Activated T-helper 1 cell treated with anti-CD3 and anti-CD28 coated beads, Interleukin-12 subunit alpha, Interleukin-12 subunit beta, Interleukin-2, Interleukin-4 antibody, amounts not matched to agents 30 ng/mL and 10 ng/mL and 1 ng/mL, durations not matched to agents 14 hours and 24 hours and 36 hours (primary cell): ENCODE measurements at regions of chr3 and their contacts with region 1.

Region 1: GRCh38 chr3:194134757-194135528 is 1.0 kb upstream of the HES1 start:
- DNase-seq: peak; percentile 80
- H3K4me3 Mint-ChIP-seq: peak overlapping the region; percentile 84
- H3K27ac Mint-ChIP-seq: peak overlapping the region; percentile 90
- H3K4me1 Mint-ChIP-seq: peaks cover 82% of the 10 kb centered on the region
- H3K27me3 Mint-ChIP-seq: peaks cover 67% of the 10 kb centered on the region

Region 2: DNA sequence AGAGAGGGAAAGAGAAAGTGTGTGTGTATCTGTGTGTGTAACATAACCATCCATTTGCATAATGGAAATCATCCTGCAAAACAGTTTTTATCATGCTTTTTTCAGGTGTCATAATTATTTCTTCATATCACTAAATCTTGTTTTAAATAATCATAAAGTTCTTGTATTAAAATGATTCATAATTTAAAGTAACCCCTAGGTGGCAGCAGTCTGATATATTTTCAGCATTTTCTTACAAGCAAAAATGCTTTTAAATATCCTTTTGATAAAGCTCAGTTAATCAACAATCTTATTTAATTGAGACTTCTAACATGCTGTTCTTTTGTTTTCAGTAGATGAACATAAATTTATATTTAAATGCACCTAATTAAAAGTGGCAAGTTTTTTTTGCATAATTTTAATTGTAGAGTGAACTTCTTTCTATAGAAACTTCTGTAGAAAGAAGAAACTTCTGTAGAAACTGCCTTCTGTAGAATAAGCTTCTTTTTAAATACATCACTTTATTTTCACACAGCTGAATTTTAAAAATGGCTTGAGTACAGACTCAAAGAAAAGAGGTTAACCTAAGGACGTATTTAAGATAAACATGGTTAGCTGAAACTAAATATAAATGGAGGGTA is 469.5 kb before region 1 on chr3:
- intact Hi-C with region 1: loop called (anchors 5 kb)
- DNase-seq: no peak
- H3K4me3 Mint-ChIP-seq: no peak overlapping the region
- H3K27ac Mint-ChIP-seq: no peak overlapping the region
- H3K4me1 Mint-ChIP-seq: no peaks in the 10 kb centered on the region
- H3K27me3 Mint-ChIP-seq: no peaks in the 10 kb centered on the region

Region 3: GRCh38 chr3:193960487-193961274 is 174.3 kb before region 1 on chr3:
- intact Hi-C with region 1: loop called (anchors 1 kb)
- DNase-seq: no peak
- H3K4me3 Mint-ChIP-seq: no peak overlapping the region
- H3K27ac Mint-ChIP-seq: no peak overlapping the region
- H3K4me1 Mint-ChIP-seq: peaks cover 44% of the 10 kb centered on the region
- H3K27me3 Mint-ChIP-seq: peaks cover 27% of the 10 kb centered on the region

Region 4: GRCh38 chr3:194255252-194256039 is 120.5 kb after region 1 on chr3:
- intact Hi-C with region 1: loop called (anchors 5 kb)
- DNase-seq: peak; percentile 13
- H3K4me3 Mint-ChIP-seq: peak overlapping the region; percentile 48
- H3K27ac Mint-ChIP-seq: peak overlapping the region; percentile 81
- H3K4me1 Mint-ChIP-seq: peaks cover 30% of the 10 kb centered on the region
- H3K27me3 Mint-ChIP-seq: peaks cover 2% of the 10 kb centered on the region

Region 5: DNA sequence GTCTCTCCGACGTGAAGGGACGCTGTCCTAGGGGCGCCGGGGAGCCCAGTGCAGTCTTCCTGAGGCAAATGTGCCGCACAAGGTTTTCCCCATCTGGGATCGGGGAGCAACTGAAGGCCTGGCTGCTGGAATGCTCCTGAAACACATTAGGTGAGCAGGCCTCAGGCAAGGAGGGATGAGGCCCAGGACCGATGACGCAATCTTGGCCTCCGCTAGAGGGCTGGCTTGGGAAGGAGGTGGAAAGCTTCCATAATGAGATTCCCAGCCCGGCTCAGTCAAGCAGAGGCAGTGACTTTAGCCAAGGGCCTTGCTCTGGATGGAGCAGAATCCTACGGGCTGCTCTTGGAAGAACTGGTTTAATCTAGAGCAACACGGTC is 165.4 kb after region 1 on chr3:
- intact Hi-C with region 1: no loop called
- DNase-seq: no peak
- H3K4me3 Mint-ChIP-seq: no peak overlapping the region
- H3K27ac Mint-ChIP-seq: no peak overlapping the region
- H3K4me1 Mint-ChIP-seq: peaks cover 21% of the 10 kb centered on the region
- H3K27me3 Mint-ChIP-seq: peaks cover 2% of the 10 kb centered on the region

Region 6: DNA sequence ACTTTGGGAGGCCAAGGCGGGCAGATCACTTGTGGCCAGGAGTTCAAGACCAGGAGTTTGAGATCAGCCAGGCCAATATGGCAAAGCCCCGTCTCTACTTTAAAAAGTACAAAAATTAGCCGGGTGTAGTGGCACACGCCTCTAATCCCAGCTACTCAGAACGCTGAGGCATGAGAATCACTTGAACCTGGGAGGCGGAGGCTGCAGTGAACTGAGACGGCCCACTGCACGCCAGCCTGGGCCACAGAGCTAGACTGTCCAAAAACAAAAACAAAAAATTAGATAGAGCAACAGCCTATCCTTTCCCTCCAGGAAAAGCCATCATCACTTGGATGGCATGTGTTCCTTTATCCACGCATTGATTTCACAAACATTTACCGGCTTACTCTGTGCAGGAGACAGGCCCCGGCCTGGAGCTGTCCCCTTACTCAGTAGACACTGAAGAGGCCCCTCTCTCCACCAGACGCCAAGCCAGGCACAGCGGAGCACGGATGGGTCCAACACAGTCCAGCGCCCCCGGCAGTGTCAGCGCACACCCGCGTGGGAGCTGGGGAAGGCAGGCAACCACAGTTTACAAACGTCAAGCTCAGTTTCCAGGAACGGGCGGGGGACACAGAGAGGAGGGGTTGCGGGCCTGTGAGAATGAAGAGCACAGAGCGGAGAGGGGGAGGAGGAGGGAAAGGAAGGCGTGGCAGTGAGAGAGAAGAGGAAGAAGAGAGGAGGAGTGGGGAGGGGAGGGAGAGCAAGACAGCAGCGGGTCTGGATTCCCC is 261.0 kb after region 1 on chr3:
- intact Hi-C with region 1: loop called (anchors 2 kb)
- DNase-seq: peak; percentile 67
- H3K4me3 Mint-ChIP-seq: peak overlapping the region; percentile 76
- H3K27ac Mint-ChIP-seq: peak overlapping the region; percentile 53
- H3K4me1 Mint-ChIP-seq: peaks cover 57% of the 10 kb centered on the region
- H3K27me3 Mint-ChIP-seq: peaks cover 4% of the 10 kb centered on the region

Region 7: GRCh38 chr3:195542698-195543499 is 1408.0 kb after region 1 on chr3 and contains the start of gene PPP1R2:
- intact Hi-C with region 1: loop called (anchors 10 kb)
- DNase-seq: peak; percentile 88
- H3K4me3 Mint-ChIP-seq: peak within 1 kb of the TSS; percentile 88
- H3K27ac Mint-ChIP-seq: peak within 1 kb of the TSS; percentile 82
- H3K4me1 Mint-ChIP-seq: peaks cover 84% of the 10 kb centered on the region
- H3K27me3 Mint-ChIP-seq: no peaks in the 10 kb centered on the region
- total RNA-seq, gene PPP1R2: 98.8 and 106 TPM in 2 replicates